Activated T-helper 2 cell treated with anti-CD3 and anti-CD28 coated beads, Interferon-gamma antibody, Interleukin-2, Interleukin-4, amounts not matched to agents 10 μg/mL and 5 μg/mL and 100 μg/mL, durations not matched to agents 14 hours and 24 hours and 36 hours (primary cell): ENCODE measurements at regions of chr2 and their contacts with region 1.

Region 1: GRCh38 chr2:168118733-168119514 is 128.5 kb downstream of the STK39 start:
- DNase-seq: no peak
- H3K4me3 Mint-ChIP-seq: no peak overlapping the region
- H3K27ac Mint-ChIP-seq: no peak overlapping the region
- H3K4me1 Mint-ChIP-seq: no peaks in the 10 kb centered on the region
- H3K27me3 Mint-ChIP-seq: no peaks in the 10 kb centered on the region

Region 2: DNA sequence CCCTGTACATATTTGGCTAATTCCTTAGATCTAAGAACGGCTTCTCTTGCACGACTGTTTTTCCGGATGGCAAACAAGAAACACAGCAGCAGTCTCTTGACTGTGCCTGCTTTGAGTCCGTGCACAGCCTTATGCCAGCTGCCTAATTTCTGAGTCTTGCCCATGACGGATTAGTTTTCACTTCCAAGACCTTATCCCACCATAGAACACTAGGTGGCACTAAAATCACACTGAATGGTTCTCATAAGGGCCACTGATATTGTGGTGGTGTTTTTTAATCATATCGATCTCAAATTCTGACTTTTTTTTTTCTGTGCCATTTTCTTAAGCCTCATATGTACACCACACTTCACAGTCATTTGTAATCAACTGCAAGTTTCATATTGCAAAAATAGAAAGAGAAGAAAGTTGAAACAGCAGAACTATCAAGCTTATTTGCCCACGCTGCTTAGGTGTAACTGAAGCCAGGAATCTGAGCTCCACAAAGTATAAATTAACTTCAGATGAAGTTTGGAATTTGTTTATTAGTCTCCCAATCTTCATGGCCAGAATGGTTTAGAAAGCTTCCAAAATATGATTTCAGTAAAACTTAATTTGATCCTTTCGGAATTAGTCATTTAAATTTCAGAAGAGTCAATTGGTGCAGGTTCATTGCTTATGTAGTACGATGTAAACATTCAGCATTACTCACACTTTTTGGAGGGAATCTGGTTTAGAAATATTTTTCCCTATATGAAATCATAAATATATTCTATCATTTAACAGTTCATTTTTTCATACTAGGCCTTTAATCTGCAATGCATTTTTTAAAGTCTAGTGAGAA is 1579.4 kb before region 1 on chr2:
- intact Hi-C with region 1: loop called (anchors 5 kb)
- DNase-seq: no peak
- H3K4me3 Mint-ChIP-seq: no peak overlapping the region
- H3K27ac Mint-ChIP-seq: no peak overlapping the region
- H3K4me1 Mint-ChIP-seq: peaks cover 1% of the 10 kb centered on the region
- H3K27me3 Mint-ChIP-seq: no peaks in the 10 kb centered on the region

Region 3: GRCh38 chr2:167862787-167863186 is 256.1 kb before region 1 on chr2:
- intact Hi-C with region 1: loop called (anchors 10 kb)
- DNase-seq: no peak
- H3K4me3 Mint-ChIP-seq: no peak overlapping the region
- H3K27ac Mint-ChIP-seq: no peak overlapping the region
- H3K4me1 Mint-ChIP-seq: peaks cover 14% of the 10 kb centered on the region
- H3K27me3 Mint-ChIP-seq: peaks cover 6% of the 10 kb centered on the region

Region 4: DNA sequence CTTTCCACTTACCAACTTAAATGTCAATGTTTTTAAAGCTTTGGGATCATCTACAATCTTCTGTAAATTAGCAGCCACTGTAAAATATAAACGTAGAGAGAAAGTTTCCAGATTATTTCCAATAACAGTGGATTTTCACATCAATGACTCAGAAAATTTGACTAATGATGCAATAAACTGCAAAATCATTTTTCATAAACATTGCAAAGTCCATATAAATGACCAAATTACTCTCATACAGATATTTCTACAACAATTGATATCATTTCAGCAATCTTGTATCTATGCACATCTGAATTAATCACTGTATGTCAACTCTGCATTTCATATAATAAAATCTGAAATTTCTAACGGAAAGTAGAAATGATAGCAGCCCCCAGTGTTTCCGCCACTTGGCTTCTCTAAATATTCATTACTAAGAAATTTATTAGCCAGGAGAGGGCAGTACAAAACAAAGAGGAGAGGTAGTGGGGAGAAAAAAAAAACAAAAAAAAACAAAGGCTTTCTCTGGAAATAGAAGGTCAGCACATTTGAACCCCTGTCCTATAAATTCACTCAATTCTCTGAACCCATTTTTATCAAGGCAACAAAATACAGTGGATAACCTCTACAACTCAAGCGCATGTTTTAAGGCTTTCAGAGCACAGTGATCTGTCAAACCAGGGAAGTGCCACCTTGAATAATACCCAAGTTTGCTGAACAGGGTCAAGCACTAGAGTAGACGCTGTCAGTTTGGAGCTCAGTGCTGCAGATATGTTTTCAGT is 154.1 kb before region 1 on chr2:
- intact Hi-C with region 1: loop called (anchors 2 kb)
- DNase-seq: no peak
- H3K4me3 Mint-ChIP-seq: no peak overlapping the region
- H3K27ac Mint-ChIP-seq: no peak overlapping the region
- H3K4me1 Mint-ChIP-seq: peaks cover 16% of the 10 kb centered on the region
- H3K27me3 Mint-ChIP-seq: no peaks in the 10 kb centered on the region

Region 5: GRCh38 chr2:168090366-168091135 is 28.4 kb before region 1 on chr2:
- intact Hi-C with region 1: no loop called
- DNase-seq: no peak
- H3K4me3 Mint-ChIP-seq: no peak overlapping the region
- H3K27ac Mint-ChIP-seq: no peak overlapping the region
- H3K4me1 Mint-ChIP-seq: peaks cover 28% of the 10 kb centered on the region
- H3K27me3 Mint-ChIP-seq: no peaks in the 10 kb centered on the region